ENCODE measurements at regions of chr13 and their contacts with region 1.

Region 1: GRCh38 chr13:48220981-48221685 is 11.9 kb upstream of the ITM2B start:
- DNase-seq: peak in 2 of 5 donors; percentile 38 to 56
- H3K4me3 ChIP-seq: peak overlapping the region; percentile 49
- H3K4me3 Mint-ChIP-seq: peak overlapping the region; percentile 59 to 84 (median 78)
- H3K27ac ChIP-seq: peak overlapping the region; percentile 26
- H3K27ac Mint-ChIP-seq: peak overlapping the region; percentile 88 to 99 (median 94)
- H3K4me1 ChIP-seq: peaks cover 54% of the 10 kb centered on the region
- H3K4me1 Mint-ChIP-seq: peaks cover 46 to 64% (median 63%) of the 10 kb centered on the region in 3 donors
- H3K27me3 ChIP-seq: no peaks in the 10 kb centered on the region
- H3K27me3 Mint-ChIP-seq: no peaks in the 10 kb centered on the region

Region 2: GRCh38 chr13:48126944-48127830 is 93.9 kb before region 1 on chr13:
- CTCF ChIA-PET with region 1: interaction called, 16 read pairs
- POLR2A ChIA-PET with region 1: no interaction called
- DNase-seq: peak in 4 of 5 donors; percentile 5 to 79 (median 66)
- H3K4me3 ChIP-seq: peak overlapping the region; percentile 16
- H3K4me3 Mint-ChIP-seq: peak overlapping the region in 6 of 7 donors; percentile 10 to 50 (median 37)
- H3K27ac ChIP-seq: no peak overlapping the region
- H3K27ac Mint-ChIP-seq: peak overlapping the region; percentile 61 to 88 (median 79)
- H3K4me1 ChIP-seq: peaks cover 12% of the 10 kb centered on the region
- H3K4me1 Mint-ChIP-seq: peaks cover 12 to 28% (median 22%) of the 10 kb centered on the region in 3 donors
- H3K27me3 ChIP-seq: no peaks in the 10 kb centered on the region
- H3K27me3 Mint-ChIP-seq: peaks cover 0 to 2% of the 10 kb centered on the region in 2 donors